BJ (cell line): ENCODE measurements at regions of chr17 and their contacts with region 1.

Region 1: DNA sequence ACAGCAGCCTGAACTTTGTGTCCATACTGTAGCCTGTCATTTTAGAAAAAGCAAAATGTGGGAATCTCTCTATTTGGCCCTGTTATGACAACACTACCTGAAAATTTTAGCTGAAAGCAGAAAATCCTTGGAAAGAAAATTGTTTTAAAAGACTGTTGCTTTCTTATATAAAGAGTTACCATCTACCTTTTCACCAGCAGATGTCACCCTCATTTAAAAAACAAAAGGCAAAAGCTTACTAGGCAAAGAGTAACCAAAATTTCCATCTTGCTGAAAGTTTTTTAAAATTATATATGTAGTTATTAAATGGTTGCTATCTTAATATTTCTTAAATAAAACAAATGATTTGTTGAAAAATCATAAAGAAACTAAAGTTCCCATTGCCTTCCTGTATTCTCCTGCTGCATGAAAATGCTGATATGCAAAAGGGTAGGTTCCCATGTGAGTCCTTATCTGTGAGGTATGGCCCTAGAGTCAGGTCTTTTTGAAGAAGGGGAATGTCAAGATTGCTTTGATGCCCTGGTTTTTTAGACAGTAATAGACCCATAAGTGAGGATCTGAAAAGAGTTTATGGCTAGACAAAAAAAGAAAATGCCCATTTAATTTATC is 61.0 kb downstream of the TNRC6C start:
- DNase-seq: no peak
- H3K4me3 ChIP-seq: no peak overlapping the region
- H3K27me3 ChIP-seq: no peaks in the 10 kb centered on the region
- CTCF ChIP-seq: peak; percentile 50

Region 2: GRCh38 chr17:77542551-77543490 is 476.6 kb before region 1 on chr17:
- CTCF ChIA-PET with region 1: interaction called, 147 read pairs
- POLR2A ChIA-PET with region 1: no interaction called
- DNase-seq: peak; percentile 24
- H3K4me3 ChIP-seq: no peak overlapping the region
- H3K27me3 ChIP-seq: peaks cover 12% of the 10 kb centered on the region
- CTCF ChIP-seq: peak; percentile 96

Region 3: GRCh38 chr17:78005452-78006171 is 13.9 kb before region 1 on chr17:
- CTCF ChIA-PET with region 1: interaction called, 28 read pairs
- POLR2A ChIA-PET with region 1: no interaction called
- DNase-seq: no peak
- H3K4me3 ChIP-seq: no peak overlapping the region
- H3K27me3 ChIP-seq: no peaks in the 10 kb centered on the region
- CTCF ChIP-seq: no peak

Region 4: DNA sequence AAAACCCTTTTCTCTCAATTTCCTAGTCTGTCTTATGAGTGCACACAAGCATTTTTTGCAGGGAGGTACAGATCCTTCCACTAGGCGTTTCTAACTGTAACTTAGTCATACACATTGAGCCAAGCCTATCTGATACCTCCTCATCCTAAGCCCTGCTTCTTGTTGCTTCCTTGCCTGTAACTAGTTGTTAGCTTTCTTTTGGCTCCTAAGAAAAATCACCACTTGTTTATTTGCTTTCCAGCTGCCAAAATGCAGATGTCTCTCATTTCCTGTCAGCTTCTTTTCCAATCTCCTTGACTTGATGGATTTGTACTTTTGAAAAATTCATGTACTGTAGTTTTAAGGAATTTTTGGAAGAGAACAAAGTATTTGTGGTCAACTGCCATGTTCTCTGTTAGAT is 12.7 kb after region 1 on chr17:
- CTCF ChIA-PET with region 1: interaction called, 10 read pairs
- POLR2A ChIA-PET with region 1: no interaction called
- DNase-seq: no peak
- H3K4me3 ChIP-seq: no peak overlapping the region
- H3K27me3 ChIP-seq: no peaks in the 10 kb centered on the region
- CTCF ChIP-seq: peak; percentile 39; the same call in 1 of the 2 replicates

Region 5: DNA sequence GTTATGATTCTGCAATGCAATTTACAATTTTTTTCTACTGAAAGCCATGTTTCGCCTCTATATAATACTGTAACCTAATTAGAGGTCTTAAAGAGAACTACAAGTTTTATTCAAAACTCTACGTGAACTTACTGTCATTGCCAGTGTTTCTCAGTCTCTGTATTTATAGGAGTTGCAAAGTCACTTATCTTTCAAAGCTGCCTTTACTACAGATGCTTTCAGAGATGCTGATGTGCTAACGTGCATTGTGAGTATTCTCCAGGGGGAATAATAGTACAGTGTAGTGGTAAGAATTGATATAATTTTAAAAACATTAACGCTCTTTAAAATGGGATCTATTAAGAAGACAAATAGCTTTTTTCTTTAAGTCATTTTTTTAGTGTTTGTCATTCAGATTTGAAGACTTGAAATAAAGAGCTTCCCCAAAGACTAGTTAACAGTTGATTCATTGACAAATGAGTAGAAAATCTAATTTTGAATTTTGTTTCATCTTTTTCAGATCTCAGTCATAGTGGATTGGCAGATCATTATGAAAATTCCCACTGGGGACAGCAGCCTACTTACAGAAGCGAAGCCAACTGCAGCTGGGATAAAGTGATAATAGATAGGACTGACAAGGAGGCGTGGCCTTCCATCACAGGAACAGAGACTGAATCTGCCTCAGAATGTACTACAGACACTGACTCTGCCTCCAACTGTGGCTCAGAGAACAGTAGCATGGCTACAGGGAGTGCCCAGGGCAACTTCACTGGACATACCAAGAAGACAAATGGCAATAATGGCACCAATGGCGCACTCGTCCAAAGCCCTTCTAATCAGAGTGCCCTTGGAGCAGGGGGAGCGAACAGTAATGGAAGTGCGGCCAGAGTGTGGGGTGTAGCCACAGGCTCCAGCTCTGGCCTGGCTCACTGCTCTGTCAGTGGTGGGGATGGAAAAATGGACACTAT is 29.1 kb after region 1 on chr17:
- CTCF ChIA-PET with region 1: no interaction called
- POLR2A ChIA-PET with region 1: no interaction called
- DNase-seq: no peak
- H3K4me3 ChIP-seq: no peak overlapping the region
- H3K27me3 ChIP-seq: no peaks in the 10 kb centered on the region
- CTCF ChIP-seq: no peak

Region 6: DNA sequence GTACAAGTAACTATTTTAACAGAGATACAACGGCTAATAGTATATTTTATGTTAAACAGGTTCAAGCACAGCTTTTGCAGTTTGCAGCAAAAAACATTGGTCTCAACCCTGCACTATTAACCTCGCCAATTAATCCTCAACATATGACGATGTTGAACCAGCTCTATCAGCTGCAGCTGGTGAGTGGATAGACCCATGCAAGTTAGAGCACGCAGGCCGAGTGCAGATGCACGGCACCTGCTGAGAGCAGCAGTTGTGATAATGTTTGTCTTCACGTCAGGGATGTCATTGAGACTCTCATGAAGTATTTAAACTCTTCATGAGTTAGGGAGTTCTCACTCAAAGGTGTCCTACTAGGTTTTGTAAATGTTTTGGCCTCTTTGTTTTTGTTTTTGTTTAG is 63.5 kb after region 1 on chr17:
- CTCF ChIA-PET with region 1: interaction called, 13 read pairs
- POLR2A ChIA-PET with region 1: no interaction called
- DNase-seq: no peak
- H3K4me3 ChIP-seq: no peak overlapping the region
- H3K27me3 ChIP-seq: no peaks in the 10 kb centered on the region
- CTCF ChIP-seq: no peak

Region 7: GRCh38 chr17:78250891-78251794 is 231.7 kb after region 1 on chr17:
- CTCF ChIA-PET with region 1: interaction called, 30 read pairs
- POLR2A ChIA-PET with region 1: no interaction called
- DNase-seq: peak; percentile 16
- H3K4me3 ChIP-seq: no peak overlapping the region
- H3K27me3 ChIP-seq: no peaks in the 10 kb centered on the region; the same call in 1 of the 2 replicates
- CTCF ChIP-seq: peak; percentile 100